Dorsolateral prefrontal cortex (tissue), 120 donors: ENCODE measurements at regions of chr18 and their contacts with region 1.

Region 1: DNA sequence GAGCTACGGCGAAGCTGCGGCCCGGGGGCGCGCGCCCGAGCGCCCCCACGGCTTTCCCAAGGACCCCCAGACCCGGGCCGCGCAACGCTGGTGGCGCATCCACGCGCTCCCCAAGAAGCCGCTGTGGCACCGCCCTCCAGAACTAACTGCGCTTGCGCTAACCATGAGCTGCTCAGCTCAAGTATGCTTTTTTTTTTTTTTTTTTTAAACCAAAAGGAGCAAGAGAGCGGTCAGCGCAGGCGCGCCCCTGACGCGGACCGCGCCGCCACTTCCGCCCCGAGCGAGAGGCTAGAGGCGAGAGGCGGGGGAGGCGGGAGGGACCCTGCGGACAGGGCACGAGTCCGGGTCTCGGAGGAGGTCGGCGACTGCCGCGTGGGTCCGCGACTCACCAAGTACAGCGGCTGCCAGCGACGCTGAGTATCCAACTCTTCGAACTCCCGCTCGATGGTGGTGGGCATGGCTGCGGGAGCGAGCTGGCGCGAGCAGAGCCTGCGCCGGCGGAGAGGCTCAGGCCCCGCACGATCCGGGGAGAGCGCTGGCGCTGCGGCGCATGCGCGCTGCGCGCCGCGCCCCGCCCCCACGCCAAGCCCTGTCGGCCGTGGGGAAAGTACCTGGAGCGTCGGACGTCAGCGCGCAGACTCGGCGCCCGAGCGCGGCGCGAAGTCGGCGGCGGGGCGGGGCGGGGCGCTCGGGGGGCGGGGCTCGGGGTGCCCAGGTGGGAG is at the start of gene PTPN2:
- DNase-seq: peak; percentile 87 to 94 (median 92)
- H3K4me3 ChIP-seq: peak within 1 kb of the TSS; percentile 66 to 99 (median 85)
- H3K27ac ChIP-seq: peak within 1 kb of the TSS; percentile 94 to 100 (median 100)
- H3K27me3 ChIP-seq: no peaks in the 10 kb centered on the region
- CTCF ChIP-seq: peak in 17 of 56 donors; percentile 5 to 45 (median 20)
- total RNA-seq, gene PTPN2: 20.7 to 58.6 (median 34.5) TPM

Region 2: DNA sequence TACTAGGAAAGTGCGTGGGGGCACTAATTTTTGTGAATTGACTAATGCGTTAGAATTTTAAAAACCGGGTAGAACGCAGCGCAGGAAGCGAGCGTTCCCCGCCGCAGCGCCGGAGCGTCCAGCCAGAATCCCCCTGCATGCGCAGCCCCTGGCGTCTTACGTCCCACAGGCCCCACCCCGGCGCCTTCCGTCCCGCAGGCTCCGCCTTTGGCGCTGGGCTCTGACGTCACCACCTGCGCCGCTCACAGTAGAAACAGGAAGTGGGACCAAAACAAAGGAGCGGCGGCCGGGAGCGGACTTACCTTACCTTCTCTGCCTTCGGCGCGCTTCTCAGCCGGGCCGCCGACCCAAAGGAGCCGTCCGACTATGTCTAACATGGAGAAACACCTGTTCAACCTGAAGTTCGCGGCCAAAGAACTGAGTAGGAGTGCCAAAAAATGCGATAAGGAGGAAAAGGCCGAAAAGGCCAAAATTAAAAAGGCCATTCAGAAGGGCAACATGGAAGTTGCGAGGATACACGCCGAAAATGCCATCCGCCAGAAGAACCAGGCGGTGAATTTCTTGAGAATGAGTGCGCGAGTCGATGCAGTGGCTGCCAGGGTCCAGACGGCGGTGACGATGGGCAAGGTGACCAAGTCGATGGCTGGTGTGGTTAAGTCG is 1032.6 kb before region 1 on chr18 and contains the start of gene CHMP1B:
- intact Hi-C with region 1: loop called in 1 of 2 experiments (anchors 10 kb)
- DNase-seq: peak; percentile 98 to 99 (median 98)
- H3K4me3 ChIP-seq: peak within 1 kb of the TSS; percentile 64 to 100 (median 94)
- H3K27ac ChIP-seq: peak within 1 kb of the TSS; percentile 66 to 98 (median 92)
- H3K27me3 ChIP-seq: no peaks in the 10 kb centered on the region
- CTCF ChIP-seq: peak in 29 of 56 donors; percentile 4 to 62 (median 28)
- total RNA-seq, gene CHMP1B: 26.5 to 54.3 (median 43.5) TPM

Region 3: GRCh38 chr18:12376718-12377555 is 506.9 kb before region 1 on chr18 and contains the start of gene AFG3L2:
- intact Hi-C with region 1: loop called in 1 of 2 experiments (anchors 10 kb)
- DNase-seq: peak; percentile 98 to 100 (median 99)
- H3K4me3 ChIP-seq: peak within 1 kb of the TSS; percentile 67 to 99 (median 92)
- H3K27ac ChIP-seq: peak within 1 kb of the TSS; percentile 66 to 98 (median 94)
- H3K27me3 ChIP-seq: no peaks in the 10 kb centered on the region
- CTCF ChIP-seq: peak in 4 of 56 donors; percentile 5 to 28 (median 12)
- total RNA-seq, gene AFG3L2: 31.6 to 64.9 (median 50.8) TPM

Region 4: DNA sequence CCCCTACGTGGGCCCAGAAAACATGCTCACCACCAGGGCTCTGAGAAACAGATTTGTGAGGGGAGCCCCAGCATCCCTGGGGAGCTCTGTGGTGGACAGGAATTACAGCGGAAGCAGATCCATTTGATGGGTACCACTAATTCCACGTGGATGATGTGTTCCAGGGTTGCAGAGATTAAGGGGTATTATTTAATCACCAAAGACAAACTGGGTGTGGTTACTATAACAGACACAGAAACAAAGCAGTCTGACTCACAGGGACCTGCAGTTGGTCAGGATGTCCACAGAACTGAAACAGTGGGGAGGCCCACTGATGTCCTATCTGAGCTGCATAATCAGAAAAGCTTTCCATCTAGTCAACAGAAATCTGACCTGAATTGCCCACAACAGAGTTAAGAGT is 115.2 kb before region 1 on chr18:
- intact Hi-C with region 1: no loop called
- DNase-seq: no peak
- H3K4me3 ChIP-seq: no peak overlapping the region
- H3K27ac ChIP-seq: no peak overlapping the region
- H3K27me3 ChIP-seq: no peaks in the 10 kb centered on the region
- CTCF ChIP-seq: no peak

Region 5: DNA sequence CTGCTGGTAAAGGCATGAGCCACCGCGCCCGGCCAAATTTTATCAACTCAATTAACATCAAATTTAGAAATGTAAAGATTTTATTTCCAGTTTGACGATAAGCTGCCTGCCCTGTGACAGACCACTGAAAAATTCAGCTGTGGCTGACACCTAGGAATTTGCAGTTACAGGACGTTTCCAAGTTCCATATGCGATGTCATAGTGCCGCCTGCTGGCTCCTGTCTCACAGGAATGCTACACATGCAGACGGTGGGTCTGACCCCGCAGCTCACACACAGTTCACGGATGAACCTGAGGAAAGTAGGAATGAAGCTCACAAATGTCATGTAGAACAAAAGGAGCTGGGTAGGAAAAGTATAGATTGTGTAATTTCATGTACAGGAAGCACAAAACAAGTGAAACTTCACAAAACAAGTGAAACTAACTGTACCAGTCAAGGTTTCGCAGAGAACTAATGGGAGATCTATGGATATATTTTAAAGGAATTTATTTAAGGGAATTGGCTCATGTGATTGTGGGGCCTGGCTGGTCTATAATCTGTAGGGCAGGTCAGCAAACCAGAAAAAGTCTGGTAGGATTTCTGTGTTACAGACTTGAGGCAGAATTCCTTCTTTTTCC is 50.7 kb after region 1 on chr18:
- intact Hi-C with region 1: loop called (anchors 5 kb)
- DNase-seq: peak; percentile 69 to 93 (median 84)
- H3K4me3 ChIP-seq: peak overlapping the region in 3 of 59 donors; percentile 2 to 25 (median 14)
- H3K27ac ChIP-seq: no peak overlapping the region
- H3K27me3 ChIP-seq: no peaks in the 10 kb centered on the region
- CTCF ChIP-seq: peak; percentile 71 to 99 (median 89)

Region 6: DNA sequence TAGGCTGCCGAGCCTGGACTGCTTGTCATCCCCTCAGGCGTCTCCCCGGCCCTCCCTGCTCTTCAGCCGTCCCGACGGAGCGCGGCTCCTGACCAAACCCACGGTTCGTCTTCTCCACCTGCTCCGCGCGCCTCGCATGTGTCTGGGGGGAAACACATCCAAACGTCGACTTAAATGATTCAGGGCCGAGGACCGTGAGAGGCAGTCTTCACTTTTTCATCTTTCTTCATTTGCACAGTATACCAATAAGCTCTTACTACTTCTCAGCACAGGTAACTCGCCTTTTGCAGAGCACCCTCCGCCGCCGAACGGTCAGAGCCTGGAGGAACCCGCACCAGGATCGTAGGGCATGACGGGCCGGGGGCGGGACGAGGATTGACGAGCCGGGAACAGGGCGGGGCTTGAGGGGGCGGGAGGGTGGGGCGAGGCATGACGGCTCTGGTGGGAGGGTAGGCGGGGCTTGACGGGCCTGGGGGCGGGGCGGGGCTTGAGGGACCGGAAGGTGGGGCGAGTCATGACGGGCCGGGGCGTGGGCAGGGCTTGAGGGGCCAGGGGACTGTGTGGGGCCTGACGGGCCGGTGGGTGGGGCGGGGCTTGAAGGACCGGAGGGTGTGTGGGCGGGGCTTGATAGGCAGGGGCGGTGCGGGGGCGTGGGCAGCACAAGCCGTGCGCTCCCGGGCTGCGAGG is 63.7 kb after region 1 on chr18 and contains the start of gene SEH1L:
- intact Hi-C with region 1: loop called (anchors 1 to 5 kb)
- DNase-seq: peak; percentile 97 to 100 (median 98)
- H3K4me3 ChIP-seq: peak within 1 kb of the TSS; percentile 65 to 99 (median 84)
- H3K27ac ChIP-seq: peak within 1 kb of the TSS; percentile 70 to 99 (median 95)
- H3K27me3 ChIP-seq: no peaks in the 10 kb centered on the region
- CTCF ChIP-seq: peak in 1 of 56 donors; percentile 3
- total RNA-seq, gene SEH1L: 28.6 to 78.9 (median 56.1) TPM

Region 7: GRCh38 chr18:12990967-12991838 is 107.4 kb after region 1 on chr18 and contains the start of gene CEP192:
- intact Hi-C with region 1: loop called in 1 of 2 experiments (anchors 5 kb)
- DNase-seq: peak; percentile 93 to 99 (median 98)
- H3K4me3 ChIP-seq: peak within 1 kb of the TSS; percentile 75 to 100 (median 92)
- H3K27ac ChIP-seq: peak within 1 kb of the TSS in 57 of 59 donors; percentile 41 to 94 (median 84)
- H3K27me3 ChIP-seq: no peaks in the 10 kb centered on the region
- CTCF ChIP-seq: peak in 46 of 56 donors; percentile 5 to 62 (median 38)
- total RNA-seq, gene CEP192: 31.3 to 63.5 (median 47.2) TPM